SK-MEL-5 (cell line): ENCODE measurements at regions of chr3 and their contacts with region 1.

Region 1: DNA sequence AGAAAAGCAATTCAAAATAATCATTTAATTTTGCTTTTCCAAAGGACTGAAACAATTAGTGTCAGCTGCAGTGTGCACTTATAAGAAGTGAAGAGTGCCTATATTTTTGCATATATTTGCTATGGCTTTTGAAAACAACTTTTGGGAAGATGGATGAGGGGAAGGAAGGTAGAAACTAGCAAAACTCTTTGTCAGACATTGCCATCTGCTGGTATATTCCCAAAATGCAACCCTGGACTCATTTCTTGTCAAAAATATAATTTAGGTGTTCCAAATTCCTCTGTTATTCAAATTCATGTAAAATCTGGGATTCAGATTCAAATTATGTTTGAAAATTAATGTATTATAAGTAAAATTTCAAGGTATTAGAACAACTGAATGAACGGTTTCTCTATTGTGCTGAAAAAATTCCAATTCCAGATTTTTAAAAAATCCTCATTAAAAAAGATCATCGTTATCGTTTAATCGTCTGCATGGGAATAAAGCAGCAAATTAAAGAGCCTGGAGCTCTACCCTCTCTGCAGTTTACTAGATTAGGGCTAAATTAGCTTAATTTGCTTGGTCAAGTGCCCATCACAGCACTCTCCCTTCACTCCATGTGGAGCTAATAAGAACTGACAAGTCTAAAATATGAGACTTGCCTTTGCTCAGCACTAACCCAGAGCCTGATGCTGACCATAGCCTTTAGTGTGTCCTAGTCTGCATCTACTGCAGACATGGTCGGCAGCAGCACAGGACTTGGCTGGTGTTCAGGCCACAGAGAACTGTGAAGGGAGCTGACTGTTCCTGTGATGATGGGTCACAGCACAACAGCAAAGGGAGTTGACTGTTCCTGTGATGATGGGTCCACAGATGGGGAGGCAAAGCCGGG is 67.9 kb upstream of the MITF start:
- DNase-seq: peak; percentile 80

Region 2: DNA sequence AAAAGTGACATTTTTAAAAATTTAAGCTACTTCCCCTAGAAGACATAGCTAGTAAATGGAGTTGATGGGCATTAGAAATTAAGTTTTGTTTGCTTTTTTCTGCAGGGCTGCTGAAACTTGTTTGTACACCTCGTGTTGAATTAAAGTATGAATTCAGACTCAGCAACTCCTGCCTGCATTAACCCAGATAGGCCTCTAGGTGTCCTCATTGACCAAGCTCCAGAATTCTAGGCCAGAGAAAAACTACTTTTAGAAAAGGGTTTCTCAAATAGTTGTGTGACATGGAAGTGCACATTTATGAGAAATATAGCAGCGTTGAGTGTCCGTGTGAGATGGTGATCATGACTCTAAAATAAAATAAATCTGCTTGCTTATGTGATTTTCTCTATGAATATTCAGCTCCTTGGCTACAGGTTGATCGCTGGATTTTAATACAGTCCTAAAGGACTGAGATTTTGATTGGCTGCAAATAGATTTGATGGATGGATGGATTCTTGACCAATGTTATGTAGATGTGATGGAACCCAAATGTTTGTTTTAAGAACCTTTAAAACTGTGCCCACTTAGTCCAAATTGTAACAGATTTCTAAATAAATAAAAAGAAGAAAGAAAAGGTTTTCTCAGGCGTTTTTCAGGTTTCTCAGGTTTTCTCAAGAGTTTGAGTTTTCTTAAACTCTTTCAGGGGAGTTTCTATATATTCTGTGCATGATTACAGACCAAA is 509.6 kb before region 1 on chr3:
- in situ Hi-C with region 1: loop called (anchors 25 kb)
- DNase-seq: peak; percentile 77

Region 3: GRCh38 chr3:69855436-69856162 is 184.3 kb after region 1 on chr3:
- in situ Hi-C with region 1: loop called (anchors 25 kb)
- DNase-seq: peak; percentile 84